GM13977 (cell line): ENCODE measurements at regions of chr18 and their contacts with region 1.

Region 1: DNA sequence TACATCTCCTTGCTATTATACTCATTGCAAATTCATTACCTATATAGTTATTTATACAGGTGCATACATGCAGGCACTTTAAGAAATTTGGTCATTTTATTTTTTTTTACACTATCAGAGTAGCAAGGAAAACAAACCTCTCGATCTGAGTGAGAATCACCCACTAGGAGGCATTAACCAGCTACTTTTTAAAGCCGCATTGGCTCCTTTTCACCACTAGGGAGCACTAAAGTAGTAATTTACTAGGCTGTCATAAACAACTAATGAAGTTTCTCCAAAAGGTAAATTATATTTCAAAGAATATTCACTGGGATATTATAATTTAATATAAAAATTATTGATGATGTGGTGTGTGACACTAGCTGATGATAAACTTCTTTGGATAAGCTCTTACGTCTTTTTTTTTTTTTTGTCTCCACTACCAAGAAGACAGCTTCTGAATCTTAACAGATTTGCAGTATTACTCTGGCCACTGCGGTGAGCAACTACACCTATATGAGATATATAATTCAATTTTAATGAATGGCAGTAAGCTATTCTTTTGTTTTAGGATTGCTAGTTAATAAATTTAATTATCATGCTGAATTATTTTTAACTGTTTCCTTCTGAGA is 101.9 kb downstream of the NOL4 start:
- DNase-seq: peak; percentile 39
- CTCF ChIP-seq: peak; percentile 80

Region 2: DNA sequence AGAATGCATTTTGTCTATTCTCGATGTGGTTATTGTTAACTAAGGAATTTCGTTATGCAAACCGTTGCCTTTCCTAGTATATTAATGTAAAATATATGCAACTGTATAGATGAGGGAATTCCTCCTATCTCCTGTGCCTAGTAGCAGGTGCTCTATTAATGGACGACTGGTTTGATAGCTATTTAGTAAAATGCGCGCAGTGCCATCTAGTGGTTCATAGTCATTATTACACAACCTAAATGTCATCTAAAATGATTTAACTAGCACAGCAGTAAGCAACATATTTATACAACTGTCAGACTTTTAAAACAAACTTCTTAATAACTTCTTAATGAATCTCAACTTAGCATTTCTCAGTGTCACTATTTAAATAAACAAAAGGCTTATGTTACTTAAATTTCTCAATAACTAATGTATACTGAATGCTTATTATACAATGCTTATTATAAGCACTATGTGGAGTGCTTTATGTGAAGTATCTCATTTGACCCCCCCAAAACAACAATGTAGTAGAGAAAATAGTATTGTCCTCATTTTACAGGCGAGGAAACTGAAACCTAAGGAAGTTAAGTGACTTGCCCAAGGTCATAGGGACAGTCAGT is 665.2 kb after region 1 on chr18:
- in situ Hi-C with region 1: loop called (anchors 25 kb)
- DNase-seq: peak; percentile 54
- CTCF ChIP-seq: peak; percentile 71